ENCODE measurements at regions of chr15 and their contacts with region 1.

Region 1: GRCh38 chr15:29668120-29668602 is 154.1 kb downstream of the TJP1 start:
- DNase-seq: peak in 1 of 2 donors; percentile 31
- ATAC-seq: peak in 1 of 4 donors; percentile 49
- H3K4me3 ChIP-seq: no peak overlapping the region
- H3K27ac ChIP-seq: no peak overlapping the region
- H3K4me1 ChIP-seq: no peaks in the 10 kb centered on the region
- H3K27me3 ChIP-seq: peaks cover 0 to 6% (median 0%) of the 10 kb centered on the region in 3 donors
- CTCF ChIP-seq: peak; percentile 58

Region 2: DNA sequence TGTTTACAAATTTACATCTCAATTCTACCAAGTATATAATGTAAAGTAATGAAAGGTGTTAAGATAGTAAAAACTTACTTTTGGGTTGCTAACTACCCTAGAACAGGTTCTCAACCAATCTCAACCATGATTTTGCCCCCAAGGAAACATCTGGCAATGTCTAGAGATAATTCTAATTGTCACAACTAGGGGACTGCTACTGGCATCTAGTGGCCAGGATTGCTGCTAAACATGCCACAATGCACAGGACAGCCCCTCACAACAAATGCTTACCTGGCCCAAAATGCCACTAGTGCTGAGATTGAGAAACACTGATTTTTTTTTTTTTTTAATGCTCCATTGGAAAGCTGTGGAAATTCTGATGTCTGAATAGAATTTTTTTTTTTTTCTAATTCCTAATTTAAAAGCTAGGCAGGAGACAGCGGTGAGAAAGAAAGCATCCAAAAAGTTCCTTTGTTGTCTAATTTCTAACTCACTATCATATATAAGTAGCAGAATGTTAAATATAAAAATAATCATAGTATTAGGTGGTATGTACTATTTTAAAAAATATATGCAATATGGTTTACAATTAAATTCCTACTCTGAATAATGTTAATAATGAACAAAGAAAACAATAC is 72.6 kb after region 1 on chr15:
- intact Hi-C with region 1: no loop called
- DNase-seq: no peak
- ATAC-seq: no peak
- H3K4me3 ChIP-seq: no peak overlapping the region
- H3K27ac ChIP-seq: no peak overlapping the region
- H3K4me1 ChIP-seq: peaks cover 12% of the 10 kb centered on the region
- H3K27me3 ChIP-seq: no peaks in the 10 kb centered on the region
- CTCF ChIP-seq: no peak

Region 3: DNA sequence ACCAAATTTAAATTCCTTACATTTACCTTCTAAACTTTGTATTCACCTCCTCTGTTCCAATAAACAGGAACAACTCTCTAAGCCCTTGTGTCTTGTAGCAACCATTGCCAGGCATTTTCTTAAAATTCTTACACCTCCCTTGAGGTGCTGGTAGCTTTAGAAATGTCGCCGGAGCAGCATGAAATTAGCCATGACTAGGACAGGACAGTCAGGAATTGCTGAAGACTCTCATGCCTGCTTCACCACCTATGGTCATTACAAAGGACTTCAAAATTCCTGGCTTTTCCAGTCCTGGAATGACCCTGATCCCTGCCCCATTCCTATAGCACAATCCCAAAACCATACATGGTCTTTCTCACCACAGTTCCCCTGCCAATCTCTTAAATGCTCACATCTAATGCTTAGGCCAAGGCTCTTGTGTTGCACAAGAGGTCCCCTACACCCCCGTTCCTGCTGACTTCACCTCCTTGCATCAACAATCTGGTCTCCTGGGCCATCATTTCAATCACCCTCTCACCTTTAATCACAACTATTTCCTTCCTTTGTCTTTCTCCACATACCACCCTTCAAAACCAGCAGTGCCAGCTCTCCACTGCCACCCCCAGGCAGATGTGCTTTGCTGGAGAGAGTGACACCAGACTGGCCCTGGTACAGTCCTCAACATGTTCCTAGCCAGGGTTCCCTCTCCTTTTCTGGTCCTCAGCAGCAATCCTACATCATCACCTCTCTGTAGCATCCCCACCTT is 267.3 kb after region 1 on chr15:
- intact Hi-C with region 1: loop called in 1 of 2 experiments (anchors 10 kb)
- DNase-seq: no peak
- ATAC-seq: no peak
- H3K4me3 ChIP-seq: no peak overlapping the region
- H3K27ac ChIP-seq: no peak overlapping the region
- H3K4me1 ChIP-seq: no peaks in the 10 kb centered on the region
- H3K27me3 ChIP-seq: peaks cover 0 to 11% (median 0%) of the 10 kb centered on the region in 3 donors
- CTCF ChIP-seq: no peak

Measured in psoas muscle (tissue), 8 donors.